Activated CD4-positive, alpha-beta memory T cell treated with anti-CD3 and anti-CD28 coated beads for 36 hours (primary cell): ENCODE measurements at regions of chr3 and their contacts with region 1.

Region 1: DNA sequence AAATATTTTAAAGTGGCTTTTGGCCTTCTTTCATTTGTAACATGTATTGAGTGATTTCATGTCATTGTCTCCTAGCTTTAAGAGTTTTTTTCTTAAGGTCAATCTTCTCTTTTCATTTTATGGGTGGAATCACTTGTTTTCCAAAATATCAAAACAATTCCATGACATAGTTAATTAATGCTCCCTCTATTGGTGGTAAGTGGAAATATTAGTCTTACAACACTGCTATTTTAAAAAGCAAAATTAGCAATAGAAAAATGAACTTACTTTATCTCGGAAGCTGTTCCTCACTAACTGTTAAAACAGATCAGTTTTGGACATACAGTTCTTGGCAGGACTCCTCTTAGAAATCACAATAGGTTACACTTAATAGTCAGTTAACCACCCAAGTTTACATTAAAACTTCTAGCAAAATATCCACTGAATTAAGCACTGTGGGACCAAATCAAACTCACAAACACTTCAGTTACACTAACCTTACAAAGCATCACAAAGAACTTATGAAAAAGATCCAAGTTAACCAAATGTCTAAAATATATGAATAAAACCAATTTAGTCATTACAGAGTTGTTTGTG is 42.4 kb downstream of the TIGIT start:
- DNase-seq: no peak
- H3K4me3 Mint-ChIP-seq: no peak overlapping the region
- H3K27ac Mint-ChIP-seq: peak overlapping the region; percentile 70
- H3K4me1 Mint-ChIP-seq: peaks cover 75% of the 10 kb centered on the region
- H3K27me3 Mint-ChIP-seq: no peaks in the 10 kb centered on the region

Region 2: GRCh38 chr3:114223143-114223542 is 113.1 kb before region 1 on chr3:
- CTCF ChIA-PET with region 1: interaction called, 7 read pairs
- POLR2A ChIA-PET with region 1: no interaction called
- intact Hi-C with region 1: loop called (anchors 1 kb)
- DNase-seq: no peak
- H3K4me3 Mint-ChIP-seq: no peak overlapping the region
- H3K27ac Mint-ChIP-seq: peak overlapping the region; percentile 92
- H3K4me1 Mint-ChIP-seq: peaks cover 90% of the 10 kb centered on the region
- H3K27me3 Mint-ChIP-seq: no peaks in the 10 kb centered on the region

Region 3: DNA sequence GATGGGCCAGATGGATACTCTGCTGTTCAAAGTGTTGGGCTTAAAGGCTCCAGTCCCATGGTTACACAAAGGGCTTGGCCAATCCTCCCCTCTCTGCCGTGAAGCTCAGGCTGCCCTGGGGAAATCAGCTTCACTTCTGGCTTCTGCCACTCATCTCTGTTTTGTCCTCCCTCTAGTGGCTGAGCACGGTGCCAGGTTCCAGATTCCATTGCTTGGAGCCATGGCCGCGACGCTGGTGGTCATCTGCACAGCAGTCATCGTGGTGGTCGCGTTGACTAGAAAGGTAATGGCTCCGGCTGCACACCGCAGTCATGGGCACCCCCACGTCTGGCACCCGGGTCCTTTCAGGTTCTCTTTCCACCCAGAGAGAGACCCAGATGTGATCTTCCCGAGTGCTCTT is 36.8 kb before region 1 on chr3:
- CTCF ChIA-PET with region 1: interaction called, 15 read pairs
- POLR2A ChIA-PET with region 1: interaction called, 7 read pairs
- intact Hi-C with region 1: no loop called
- DNase-seq: peak; percentile 60
- H3K4me3 Mint-ChIP-seq: peak overlapping the region; percentile 66
- H3K27ac Mint-ChIP-seq: peak overlapping the region; percentile 84
- H3K4me1 Mint-ChIP-seq: peaks cover 46% of the 10 kb centered on the region
- H3K27me3 Mint-ChIP-seq: no peaks in the 10 kb centered on the region

Region 4: DNA sequence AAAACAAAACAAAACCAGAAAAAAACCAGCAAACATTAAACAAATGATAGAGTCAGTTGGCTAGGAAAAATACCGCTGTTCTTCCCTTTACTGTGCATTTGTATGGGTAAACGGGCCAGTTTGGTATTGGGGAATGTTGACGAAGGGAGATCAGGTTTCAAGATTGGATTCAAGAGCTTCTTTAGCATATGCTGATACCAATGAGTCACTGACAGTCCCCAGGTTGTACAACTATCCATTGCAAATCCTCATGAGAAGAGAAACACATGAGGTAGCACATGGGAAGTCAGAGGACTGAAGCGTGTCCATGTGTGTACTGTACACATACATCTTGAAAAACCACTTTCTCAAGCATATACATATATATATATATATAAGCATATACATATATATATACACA is 16.8 kb before region 1 on chr3:
- CTCF ChIA-PET with region 1: interaction called, 3 read pairs
- POLR2A ChIA-PET with region 1: interaction called, 3 read pairs
- intact Hi-C with region 1: loop called (anchors 1 kb)
- DNase-seq: no peak
- H3K4me3 Mint-ChIP-seq: no peak overlapping the region
- H3K27ac Mint-ChIP-seq: no peak overlapping the region
- H3K4me1 Mint-ChIP-seq: peaks cover 85% of the 10 kb centered on the region
- H3K27me3 Mint-ChIP-seq: no peaks in the 10 kb centered on the region

Region 5: GRCh38 chr3:114362815-114363214 is 26.6 kb after region 1 on chr3:
- CTCF ChIA-PET with region 1: interaction called, 3 read pairs
- POLR2A ChIA-PET with region 1: no interaction called
- intact Hi-C with region 1: loop called (anchors 2 kb)
- DNase-seq: no peak
- H3K4me3 Mint-ChIP-seq: no peak overlapping the region
- H3K27ac Mint-ChIP-seq: no peak overlapping the region
- H3K4me1 Mint-ChIP-seq: peaks cover 17% of the 10 kb centered on the region
- H3K27me3 Mint-ChIP-seq: no peaks in the 10 kb centered on the region

Region 6: GRCh38 chr3:114649331-114649730 is 313.1 kb after region 1 on chr3:
- CTCF ChIA-PET with region 1: no interaction called
- POLR2A ChIA-PET with region 1: no interaction called
- intact Hi-C with region 1: no loop called
- DNase-seq: no peak
- H3K4me3 Mint-ChIP-seq: no peak overlapping the region
- H3K27ac Mint-ChIP-seq: no peak overlapping the region
- H3K4me1 Mint-ChIP-seq: peaks cover 11% of the 10 kb centered on the region
- H3K27me3 Mint-ChIP-seq: no peaks in the 10 kb centered on the region